ENCODE measurements at regions of chr7 and their contacts with region 1.

Region 1: GRCh38 chr7:55255496-55256435 is 109.4 kb upstream of the LANCL2 start:
- DNase-seq: peak; percentile 76
- H3K4me3 ChIP-seq: peak overlapping the region; percentile 23 to 75 (median 39)
- H3K27ac ChIP-seq: no peak overlapping the region
- H3K4me1 ChIP-seq: peaks cover 9% of the 10 kb centered on the region
- H3K27me3 ChIP-seq: peaks cover 44 to 53% of the 10 kb centered on the region in 2 experiments
- CTCF ChIP-seq: peak; percentile 92 to 97
- POLR2A ChIP-seq: no peak

Region 2: GRCh38 chr7:54758702-54759592 is 496.8 kb before region 1 on chr7 and contains the start of gene SEC61G:
- CTCF ChIA-PET with region 1: interaction called, 50 read pairs
- POLR2A ChIA-PET with region 1: interaction called, 3 read pairs
- dilution Hi-C with region 1: no loop called
- intact Hi-C with region 1: no loop called
- DNase-seq: peak; percentile 97
- H3K4me3 ChIP-seq: peak within 1 kb of the TSS; percentile 86 to 94 (median 89)
- H3K27ac ChIP-seq: peak within 1 kb of the TSS; percentile 69
- H3K4me1 ChIP-seq: peaks cover 20% of the 10 kb centered on the region
- H3K27me3 ChIP-seq: peaks cover 0 to under 1% of the 10 kb centered on the region in 2 experiments
- CTCF ChIP-seq: no peak
- POLR2A ChIP-seq: peak; percentile 97
- total RNA-seq, gene SEC61G: 201 and 206 TPM in 2 replicates

Region 3: DNA sequence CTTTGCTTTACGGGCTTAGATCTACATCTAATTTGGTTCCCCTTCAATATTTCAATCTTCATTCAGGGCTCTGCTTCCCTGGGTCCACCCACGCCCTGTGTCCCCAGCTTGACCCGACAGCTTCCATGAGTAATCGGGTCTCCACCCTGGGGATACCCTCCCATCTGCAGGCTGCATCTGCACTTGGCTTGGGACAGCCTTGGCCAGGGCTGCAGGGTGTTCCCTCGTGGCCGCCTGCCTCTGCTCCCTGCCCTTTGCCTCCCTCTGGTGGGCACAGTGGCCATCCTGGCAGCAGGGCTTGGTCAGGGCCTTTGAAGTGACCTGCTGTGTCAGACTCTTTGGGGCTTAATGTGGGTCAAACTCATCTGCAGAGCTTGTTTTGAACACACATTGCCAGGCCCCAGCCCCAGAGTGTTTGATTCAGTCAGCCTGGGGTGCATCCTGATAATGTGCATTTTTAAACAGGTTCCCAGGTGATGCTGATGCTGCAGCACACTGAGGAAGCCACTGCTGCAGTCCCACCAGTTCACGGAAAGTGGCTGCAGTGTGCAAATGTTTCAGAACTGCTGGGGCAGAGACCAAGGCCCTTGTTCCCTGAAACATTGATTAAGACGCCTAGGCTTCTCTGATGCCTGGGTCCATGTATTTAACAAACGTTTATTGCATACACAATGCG is 416.1 kb before region 1 on chr7:
- CTCF ChIA-PET with region 1: interaction called, 32 read pairs
- POLR2A ChIA-PET with region 1: no interaction called
- dilution Hi-C with region 1: no loop called
- intact Hi-C with region 1: loop called (anchors 1 kb)
- DNase-seq: peak; percentile 43
- H3K4me3 ChIP-seq: no peak overlapping the region
- H3K27ac ChIP-seq: no peak overlapping the region
- H3K4me1 ChIP-seq: no peaks in the 10 kb centered on the region
- H3K27me3 ChIP-seq: peaks cover 10% of the 10 kb centered on the region in 2 experiments
- CTCF ChIP-seq: peak; percentile 68 to 78
- POLR2A ChIP-seq: no peak

Region 4: GRCh38 chr7:54985405-54986330 is 270.1 kb before region 1 on chr7:
- CTCF ChIA-PET with region 1: interaction called, 11 read pairs
- POLR2A ChIA-PET with region 1: no interaction called
- dilution Hi-C with region 1: no loop called
- intact Hi-C with region 1: no loop called
- DNase-seq: no peak
- H3K4me3 ChIP-seq: no peak overlapping the region
- H3K27ac ChIP-seq: no peak overlapping the region
- H3K4me1 ChIP-seq: peaks cover 8% of the 10 kb centered on the region
- H3K27me3 ChIP-seq: peaks cover 19 to 52% of the 10 kb centered on the region in 2 experiments
- CTCF ChIP-seq: no peak
- POLR2A ChIP-seq: no peak

Region 5: GRCh38 chr7:55065079-55065478 is 190.7 kb before region 1 on chr7:
- CTCF ChIA-PET with region 1: interaction called, 28 read pairs
- POLR2A ChIA-PET with region 1: interaction called, 7 read pairs
- dilution Hi-C with region 1: no loop called
- intact Hi-C with region 1: loop called (anchors 1 kb)
- DNase-seq: peak; percentile 83
- H3K4me3 ChIP-seq: no peak overlapping the region
- H3K27ac ChIP-seq: peak overlapping the region; percentile 95
- H3K4me1 ChIP-seq: peaks cover 19% of the 10 kb centered on the region
- H3K27me3 ChIP-seq: no peaks in the 10 kb centered on the region
- CTCF ChIP-seq: no peak
- POLR2A ChIP-seq: no peak

Region 6: GRCh38 chr7:55192718-55193117 is 63.0 kb before region 1 on chr7:
- CTCF ChIA-PET with region 1: interaction called, 15 read pairs
- POLR2A ChIA-PET with region 1: no interaction called
- dilution Hi-C with region 1: no loop called
- intact Hi-C with region 1: loop called (anchors 2 kb)
- DNase-seq: peak; percentile 90
- H3K4me3 ChIP-seq: no peak overlapping the region
- H3K27ac ChIP-seq: peak overlapping the region; percentile 80
- H3K4me1 ChIP-seq: peaks cover 42% of the 10 kb centered on the region
- H3K27me3 ChIP-seq: no peaks in the 10 kb centered on the region
- CTCF ChIP-seq: no peak
- POLR2A ChIP-seq: peak; percentile 45